Stomach (tissue), 19 donors: ENCODE measurements at regions of chr6 and their contacts with region 1.

Region 1: DNA sequence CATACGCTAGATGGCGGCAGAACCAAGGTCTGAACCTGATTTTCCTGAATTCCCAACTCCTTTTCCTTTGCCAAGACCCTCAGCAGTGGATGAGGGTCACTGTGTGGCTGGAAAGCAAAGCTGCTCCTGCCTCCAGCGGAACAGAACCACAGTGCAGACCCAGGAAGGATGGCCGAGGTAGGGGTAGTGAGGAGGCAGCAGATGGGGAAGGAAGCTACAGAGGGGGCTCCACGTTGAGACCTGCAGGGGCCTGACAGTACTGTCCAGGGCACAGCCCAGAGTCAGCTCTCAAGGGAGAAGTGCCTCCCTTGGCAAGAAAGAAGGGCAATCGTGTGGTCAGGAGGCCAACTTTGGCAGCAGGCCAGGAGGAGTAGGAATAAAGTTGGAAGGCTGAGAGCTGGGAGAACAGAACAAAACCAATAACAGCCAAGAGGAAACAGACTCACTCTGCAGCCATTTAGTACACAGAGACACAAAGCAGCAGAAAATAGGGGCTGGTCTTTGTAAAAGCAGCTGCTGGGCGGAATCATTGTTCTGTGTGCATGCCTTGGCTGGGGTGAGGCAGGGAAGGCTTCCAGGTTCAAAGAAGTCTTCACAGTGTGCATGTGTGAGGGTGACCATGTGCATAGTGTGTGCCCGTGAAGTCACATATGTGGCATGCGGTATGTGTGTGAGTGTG is 3.1 kb downstream of the GABRR2 start:
- DNase-seq: peak; percentile 75 to 88
- H3K4me3 ChIP-seq: peak overlapping the region; percentile 8 to 25 (median 10)
- H3K27ac ChIP-seq: peak overlapping the region; percentile 36 to 75 (median 65)
- H3K4me1 ChIP-seq: peaks cover 16 to 32% (median 21%) of the 10 kb centered on the region in 4 donors
- H3K27me3 ChIP-seq: no peaks in the 10 kb centered on the region
- CTCF ChIP-seq: peak in 5 of 7 experiments; percentile 20 to 44 (median 39)
- EP300 ChIP-seq: no peak
- POLR2A ChIP-seq: no peak

Region 2: DNA sequence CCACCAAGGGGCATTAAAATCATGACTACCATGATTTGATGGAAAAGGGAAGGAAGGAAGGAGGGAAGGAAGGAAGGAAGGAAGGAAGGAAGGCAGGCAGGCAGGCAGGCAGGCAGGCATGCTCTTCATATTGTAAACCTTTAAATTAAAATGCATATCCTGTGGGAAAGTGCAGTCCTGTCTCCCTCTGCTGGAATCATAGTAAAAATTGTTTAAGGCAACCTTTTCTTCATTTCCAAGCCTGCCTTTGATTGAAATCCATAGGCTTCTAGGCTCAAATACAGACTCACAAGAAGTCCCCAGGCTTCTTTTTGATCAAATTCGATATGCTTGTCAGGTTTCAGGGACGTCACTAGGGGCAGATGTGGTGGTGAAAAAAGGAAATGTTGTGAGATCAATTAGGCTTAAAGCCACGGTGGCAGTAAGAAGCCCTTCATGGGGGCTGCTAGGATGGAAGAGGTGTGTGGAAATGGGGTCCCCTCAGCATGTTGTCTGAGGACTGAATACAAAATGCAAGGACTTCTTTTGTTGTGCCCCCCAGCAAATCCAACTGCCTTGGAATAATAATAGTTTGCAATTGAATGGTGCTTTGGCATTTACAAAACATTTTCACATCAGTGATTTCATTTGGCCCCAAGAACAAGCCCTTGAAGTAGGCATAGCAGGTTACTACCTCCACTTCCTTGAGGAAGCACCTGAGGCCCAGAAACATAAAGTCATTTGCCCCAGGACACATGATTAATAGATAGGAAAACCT is 69.2 kb before region 1 on chr6:
- intact Hi-C with region 1: no loop called
- DNase-seq: peak in 1 of 2 donors; percentile 84
- H3K4me3 ChIP-seq: no peak overlapping the region
- H3K27ac ChIP-seq: no peak overlapping the region
- H3K4me1 ChIP-seq: peaks cover 0 to 5% (median 0%) of the 10 kb centered on the region in 4 donors
- H3K27me3 ChIP-seq: no peaks in the 10 kb centered on the region
- CTCF ChIP-seq: peak in 4 of 7 experiments; percentile 26 to 63 (median 54)
- EP300 ChIP-seq: no peak
- POLR2A ChIP-seq: no peak

Region 3: DNA sequence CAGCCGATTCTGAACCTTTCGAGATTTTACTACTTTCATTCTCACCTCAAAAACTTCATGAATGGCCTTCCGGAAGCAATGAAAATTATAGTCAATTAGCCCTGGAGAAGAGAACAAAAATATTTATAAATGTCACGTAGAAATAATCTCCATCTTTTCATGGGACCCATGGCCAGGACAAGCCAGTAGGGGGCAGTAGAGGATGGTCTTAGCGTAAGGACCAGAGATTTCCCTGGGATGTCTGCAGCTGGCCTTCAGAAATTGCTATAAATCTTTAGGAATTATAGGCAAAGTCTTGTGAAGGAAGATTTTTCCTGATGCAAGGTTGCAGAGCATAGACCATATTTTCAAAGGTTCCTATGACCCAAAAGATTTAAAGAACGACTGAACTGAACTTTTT is 56.1 kb after region 1 on chr6:
- intact Hi-C with region 1: loop called (anchors 10 kb)
- DNase-seq: peak; percentile 63 to 81
- H3K4me3 ChIP-seq: no peak overlapping the region
- H3K27ac ChIP-seq: peak overlapping the region in 1 of 5 donors; percentile 5
- H3K4me1 ChIP-seq: peaks cover 0 to 26% (median 15%) of the 10 kb centered on the region in 4 donors
- H3K27me3 ChIP-seq: no peaks in the 10 kb centered on the region
- CTCF ChIP-seq: peak in 5 of 7 experiments; percentile 19 to 77 (median 41)
- EP300 ChIP-seq: no peak
- POLR2A ChIP-seq: no peak